Activated naive CD4-positive, alpha-beta T cell treated with anti-CD3 and anti-CD28 coated beads for 36 hours (primary cell): ENCODE measurements at regions of chr5 and their contacts with region 1.

Region 1: GRCh38 chr5:91419571-91420537 is 36.7 kb upstream of the ARRDC3 start:
- DNase-seq: peak; percentile 83
- H3K4me3 Mint-ChIP-seq: no peak overlapping the region
- H3K27ac Mint-ChIP-seq: no peak overlapping the region
- H3K4me1 Mint-ChIP-seq: peaks cover 8% of the 10 kb centered on the region
- H3K27me3 Mint-ChIP-seq: no peaks in the 10 kb centered on the region

Region 2: GRCh38 chr5:90866333-90866732 is 553.5 kb before region 1 on chr5:
- CTCF ChIA-PET with region 1: interaction called, 34 read pairs
- intact Hi-C with region 1: loop called (anchors 1 kb)
- DNase-seq: no peak
- H3K4me3 Mint-ChIP-seq: no peak overlapping the region
- H3K27ac Mint-ChIP-seq: no peak overlapping the region
- H3K4me1 Mint-ChIP-seq: peaks cover 4% of the 10 kb centered on the region
- H3K27me3 Mint-ChIP-seq: peaks cover 7% of the 10 kb centered on the region

Region 3: GRCh38 chr5:90940227-90940995 is 479.4 kb before region 1 on chr5:
- CTCF ChIA-PET with region 1: no interaction called
- intact Hi-C with region 1: loop called (anchors 2 kb)
- DNase-seq: peak; percentile 88
- H3K4me3 Mint-ChIP-seq: no peak overlapping the region
- H3K27ac Mint-ChIP-seq: peak overlapping the region; percentile 73
- H3K4me1 Mint-ChIP-seq: peaks cover 13% of the 10 kb centered on the region
- H3K27me3 Mint-ChIP-seq: no peaks in the 10 kb centered on the region

Region 4: GRCh38 chr5:91219803-91220371 is 200.0 kb before region 1 on chr5:
- CTCF ChIA-PET with region 1: interaction called, 36 read pairs
- intact Hi-C with region 1: no loop called
- DNase-seq: peak; percentile 59
- H3K4me3 Mint-ChIP-seq: no peak overlapping the region
- H3K27ac Mint-ChIP-seq: no peak overlapping the region
- H3K4me1 Mint-ChIP-seq: no peaks in the 10 kb centered on the region
- H3K27me3 Mint-ChIP-seq: no peaks in the 10 kb centered on the region

Region 5: DNA sequence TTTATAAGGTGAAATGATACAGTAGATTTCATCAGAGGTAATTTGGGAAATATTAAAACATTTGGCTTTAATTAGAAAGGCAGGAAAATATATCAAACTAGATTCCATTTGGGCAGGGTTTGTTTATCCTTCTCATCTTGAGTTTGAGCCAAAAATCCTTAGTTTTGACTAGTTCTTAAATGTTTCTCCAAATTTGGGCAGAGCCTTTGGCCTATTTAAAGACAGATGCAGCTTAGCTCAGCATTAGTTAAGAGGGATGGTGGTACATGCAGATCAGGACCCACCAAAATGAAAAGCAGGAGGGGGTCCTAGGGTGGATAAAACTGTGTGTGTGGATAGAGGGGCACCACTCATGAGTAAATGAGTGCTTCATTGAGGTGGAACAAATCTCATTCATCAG is 16.4 kb before region 1 on chr5:
- CTCF ChIA-PET with region 1: interaction called, 28 read pairs
- intact Hi-C with region 1: no loop called
- DNase-seq: no peak
- H3K4me3 Mint-ChIP-seq: no peak overlapping the region
- H3K27ac Mint-ChIP-seq: no peak overlapping the region
- H3K4me1 Mint-ChIP-seq: no peaks in the 10 kb centered on the region
- H3K27me3 Mint-ChIP-seq: no peaks in the 10 kb centered on the region

Region 6: DNA sequence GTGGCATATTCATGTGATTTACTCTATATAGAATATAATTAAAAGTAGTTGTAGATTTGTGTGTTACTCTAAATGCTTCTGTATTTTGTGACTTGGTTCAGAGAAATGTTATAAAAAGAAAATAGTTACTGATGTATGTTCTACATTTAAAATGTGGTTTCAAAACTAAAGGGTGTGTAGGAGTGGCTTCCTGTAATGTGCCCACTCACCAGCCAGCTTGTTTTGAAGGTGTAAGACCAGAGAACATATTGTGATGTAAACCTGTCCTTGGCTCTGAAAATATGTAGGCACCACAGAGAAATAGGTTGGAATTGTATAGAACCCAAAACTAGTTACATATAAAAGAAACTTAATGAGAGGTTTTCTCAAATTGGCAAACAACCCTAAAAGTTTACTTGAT is 14.5 kb after region 1 on chr5:
- CTCF ChIA-PET with region 1: interaction called, 10 read pairs
- intact Hi-C with region 1: no loop called
- DNase-seq: peak; percentile 10
- H3K4me3 Mint-ChIP-seq: no peak overlapping the region
- H3K27ac Mint-ChIP-seq: peak overlapping the region; percentile 9
- H3K4me1 Mint-ChIP-seq: peaks cover 31% of the 10 kb centered on the region
- H3K27me3 Mint-ChIP-seq: no peaks in the 10 kb centered on the region

Region 7: GRCh38 chr5:91499943-91500531 is 80.2 kb after region 1 on chr5:
- CTCF ChIA-PET with region 1: interaction called, 10 read pairs
- intact Hi-C with region 1: no loop called
- DNase-seq: no peak
- H3K4me3 Mint-ChIP-seq: no peak overlapping the region
- H3K27ac Mint-ChIP-seq: no peak overlapping the region
- H3K4me1 Mint-ChIP-seq: peaks cover 2% of the 10 kb centered on the region
- H3K27me3 Mint-ChIP-seq: no peaks in the 10 kb centered on the region

Region 8: DNA sequence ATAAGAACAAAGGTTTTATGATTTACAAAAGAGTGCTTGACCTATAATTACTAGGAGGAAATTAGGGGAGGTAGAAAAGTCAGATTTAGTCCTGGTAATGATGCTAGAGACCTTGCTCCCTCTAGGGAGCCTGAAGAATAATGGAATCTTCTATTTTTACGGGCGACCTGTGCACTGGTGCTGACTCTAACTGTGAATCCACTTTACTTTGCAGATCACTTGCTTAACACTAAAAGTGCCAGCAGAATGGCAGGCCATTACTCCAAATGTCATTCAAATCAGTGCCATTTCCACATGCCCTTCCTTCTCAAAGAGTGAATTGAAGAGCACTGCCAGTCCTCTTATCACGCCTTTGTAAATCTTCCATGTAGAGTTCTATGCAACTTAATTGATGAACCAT is 322.7 kb after region 1 on chr5:
- CTCF ChIA-PET with region 1: no interaction called
- intact Hi-C with region 1: no loop called
- DNase-seq: no peak
- H3K4me3 Mint-ChIP-seq: no peak overlapping the region
- H3K27ac Mint-ChIP-seq: no peak overlapping the region
- H3K4me1 Mint-ChIP-seq: no peaks in the 10 kb centered on the region
- H3K27me3 Mint-ChIP-seq: no peaks in the 10 kb centered on the region